Left ventricle myocardium superior (tissue), 1 donor: ENCODE measurements at regions of chr18 and their contacts with region 1.

Region 1: DNA sequence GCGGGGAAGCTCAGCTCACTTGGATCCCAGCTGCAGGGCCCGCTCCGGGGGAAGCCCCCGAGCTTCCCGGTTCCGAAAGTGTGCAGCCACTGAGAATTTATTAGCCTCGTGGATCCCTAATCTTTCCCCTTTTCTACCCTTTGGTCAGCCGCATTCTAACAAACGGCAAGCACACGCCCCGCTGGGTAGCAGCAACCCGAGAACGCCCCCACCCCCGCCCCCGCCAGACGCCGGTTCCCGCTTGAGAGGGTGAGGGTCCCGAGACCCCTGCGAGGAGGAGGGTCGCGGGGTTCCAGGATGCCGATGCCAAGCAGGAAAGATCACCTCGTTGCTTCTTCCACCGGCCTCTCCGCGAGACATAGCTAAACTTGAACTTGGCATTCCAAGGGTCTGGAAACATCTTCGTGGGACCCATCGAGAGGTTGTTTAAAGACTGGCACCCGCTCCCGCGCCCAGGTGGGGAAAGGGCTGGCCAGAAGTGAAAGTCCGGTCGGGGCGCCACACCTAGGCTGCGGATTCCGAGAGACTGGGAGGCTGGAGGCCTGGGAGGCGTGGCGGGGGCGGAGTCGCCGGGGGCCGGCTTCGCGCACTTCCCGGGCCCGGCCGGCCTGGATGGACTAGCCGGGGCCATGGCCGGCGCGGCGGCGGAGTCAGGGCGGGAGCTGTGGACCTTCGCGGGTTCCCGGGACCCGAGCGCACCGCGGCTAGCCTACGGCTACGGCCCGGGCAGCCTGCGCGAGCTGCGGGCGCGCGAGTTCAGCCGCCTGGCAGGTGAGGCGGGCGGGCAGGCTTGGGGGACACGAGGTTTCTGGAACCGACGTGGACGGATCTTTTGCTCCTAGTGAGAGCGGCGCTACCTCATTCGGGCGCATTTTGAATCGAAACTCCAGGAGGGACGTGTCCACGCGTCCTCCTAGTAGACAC is at the start of gene MOCOS:
- DNase-seq: peak; percentile 88
- ATAC-seq: peak; percentile 98
- total RNA-seq, gene MOCOS: 0.27 TPM

Region 2: GRCh38 chr18:36217348-36217747 is 30.2 kb after region 1 on chr18:
- intact Hi-C with region 1: no loop called
- DNase-seq: no peak
- ATAC-seq: no peak

Region 3: DNA sequence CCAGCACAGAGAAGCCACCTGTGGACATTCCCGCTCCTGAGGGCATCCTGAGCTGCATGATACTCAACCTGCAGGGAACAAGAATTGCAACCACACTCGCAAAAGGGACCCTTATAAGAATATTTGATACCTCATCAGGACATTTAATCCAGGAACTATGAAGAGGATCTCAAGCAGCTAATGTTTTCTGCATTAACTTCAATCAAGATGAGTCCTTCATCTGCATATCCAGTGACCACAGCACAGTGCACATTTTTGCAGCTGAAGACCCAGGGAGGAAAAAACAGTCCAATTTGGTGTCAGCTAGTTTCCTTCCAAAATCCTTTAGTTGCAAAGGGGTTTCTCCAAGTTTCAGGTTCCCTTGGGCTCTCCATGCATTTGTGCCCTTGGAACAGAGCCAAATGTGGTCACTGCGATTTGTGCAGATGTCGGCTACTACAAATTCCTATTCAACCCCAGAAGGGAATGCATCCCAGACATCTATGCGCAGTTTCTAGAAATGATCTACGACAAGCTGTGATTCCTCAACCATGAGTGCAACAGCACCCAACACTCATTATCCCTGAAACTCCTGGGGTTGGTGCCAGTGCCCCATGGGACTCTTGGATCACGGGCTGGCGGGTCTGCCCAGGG is 87.0 kb after region 1 on chr18:
- intact Hi-C with region 1: loop called (anchors 10 kb)
- DNase-seq: no peak
- ATAC-seq: no peak